AG04449 (cell line): ENCODE measurements at regions of chr2 and their contacts with region 1.

Region 1: GRCh38 chr2:134118279-134119116 is 135.4 kb upstream of the MGAT5 start:
- DNase-seq: peak; percentile 94
- H3K4me3 ChIP-seq: no peak overlapping the region
- CTCF ChIP-seq: peak; percentile 68

Region 2: DNA sequence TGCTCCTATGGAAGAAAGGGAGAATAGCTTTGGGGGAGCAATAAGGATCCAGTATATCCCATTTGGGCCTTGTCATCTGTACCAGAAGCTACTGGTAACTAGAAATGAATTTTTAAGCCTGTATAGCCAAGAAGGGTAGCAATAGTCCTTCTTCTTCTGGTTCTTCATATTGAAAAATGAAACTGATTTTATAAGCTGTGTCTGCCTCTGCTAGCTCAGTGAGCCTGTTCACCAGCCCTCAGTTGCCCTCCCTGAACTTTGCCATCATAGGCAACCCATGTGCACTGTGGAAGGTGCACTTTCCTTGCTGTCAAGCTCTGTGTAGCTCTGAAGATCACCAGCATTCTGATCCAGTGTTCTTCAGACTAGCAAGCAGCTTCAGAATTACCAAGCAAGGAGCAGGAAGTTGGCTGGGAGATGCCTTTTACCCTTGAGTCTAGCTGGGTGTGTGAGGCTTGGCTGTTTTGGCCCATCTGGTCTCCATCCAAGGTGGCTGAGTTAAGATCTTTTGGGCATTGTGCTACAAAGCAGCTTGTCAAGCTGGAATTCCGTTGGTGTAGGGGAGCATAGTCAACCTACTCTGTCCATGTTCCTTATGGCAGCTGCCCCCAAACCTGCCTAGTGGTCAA is 79.6 kb after region 1 on chr2:
- CTCF ChIA-PET with region 1: interaction called, 10 read pairs
- POLR2A ChIA-PET with region 1: no interaction called
- DNase-seq: no peak
- H3K4me3 ChIP-seq: no peak overlapping the region
- CTCF ChIP-seq: no peak

Region 3: GRCh38 chr2:134232868-134233727 is 114.6 kb after region 1 on chr2:
- CTCF ChIA-PET with region 1: interaction called, 14 read pairs
- POLR2A ChIA-PET with region 1: interaction called, 3 read pairs
- DNase-seq: no peak
- H3K4me3 ChIP-seq: no peak overlapping the region
- CTCF ChIP-seq: no peak

Region 4: DNA sequence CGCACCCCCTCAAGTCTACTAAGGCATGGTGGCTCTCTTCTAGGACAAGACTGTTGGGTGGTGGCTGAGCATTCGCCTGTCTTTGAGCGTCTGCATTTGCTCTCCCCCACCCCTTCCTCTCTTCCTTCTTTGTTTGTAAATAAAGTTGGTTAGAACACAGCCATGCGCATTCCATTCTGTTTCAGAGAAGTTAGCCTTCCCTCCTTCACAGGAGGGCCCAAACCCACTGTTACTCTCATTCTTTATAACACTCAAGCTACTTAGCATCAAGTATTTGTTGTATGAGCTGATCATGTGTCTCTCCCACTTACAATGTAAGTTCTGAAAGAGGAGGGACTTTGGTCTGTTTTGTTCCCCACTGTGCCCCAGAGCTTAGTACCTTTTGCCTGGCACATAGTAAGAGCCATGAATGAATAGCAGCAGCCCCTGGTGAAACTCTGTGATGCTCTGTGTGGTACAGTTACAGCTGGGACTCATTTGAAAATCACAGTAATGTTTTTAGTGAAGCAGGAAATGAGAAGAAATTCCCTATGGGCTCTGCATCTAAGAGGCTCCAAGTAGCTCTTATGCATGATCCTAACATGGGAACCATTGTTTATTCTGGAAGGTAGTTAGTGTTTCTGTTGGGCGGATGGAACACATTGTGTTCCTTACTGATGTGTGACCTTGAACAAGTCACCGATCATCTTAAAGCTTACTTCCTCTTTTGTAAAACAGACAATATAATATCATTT is 143.1 kb after region 1 on chr2:
- CTCF ChIA-PET with region 1: interaction called, 17 read pairs
- POLR2A ChIA-PET with region 1: interaction called, 6 read pairs
- DNase-seq: no peak
- H3K4me3 ChIP-seq: no peak overlapping the region
- CTCF ChIP-seq: no peak

Region 5: GRCh38 chr2:134402410-134402809 is 283.9 kb after region 1 on chr2:
- CTCF ChIA-PET with region 1: interaction called, 14 read pairs
- POLR2A ChIA-PET with region 1: no interaction called
- DNase-seq: peak; percentile 79
- H3K4me3 ChIP-seq: no peak overlapping the region
- CTCF ChIP-seq: no peak

Region 6: DNA sequence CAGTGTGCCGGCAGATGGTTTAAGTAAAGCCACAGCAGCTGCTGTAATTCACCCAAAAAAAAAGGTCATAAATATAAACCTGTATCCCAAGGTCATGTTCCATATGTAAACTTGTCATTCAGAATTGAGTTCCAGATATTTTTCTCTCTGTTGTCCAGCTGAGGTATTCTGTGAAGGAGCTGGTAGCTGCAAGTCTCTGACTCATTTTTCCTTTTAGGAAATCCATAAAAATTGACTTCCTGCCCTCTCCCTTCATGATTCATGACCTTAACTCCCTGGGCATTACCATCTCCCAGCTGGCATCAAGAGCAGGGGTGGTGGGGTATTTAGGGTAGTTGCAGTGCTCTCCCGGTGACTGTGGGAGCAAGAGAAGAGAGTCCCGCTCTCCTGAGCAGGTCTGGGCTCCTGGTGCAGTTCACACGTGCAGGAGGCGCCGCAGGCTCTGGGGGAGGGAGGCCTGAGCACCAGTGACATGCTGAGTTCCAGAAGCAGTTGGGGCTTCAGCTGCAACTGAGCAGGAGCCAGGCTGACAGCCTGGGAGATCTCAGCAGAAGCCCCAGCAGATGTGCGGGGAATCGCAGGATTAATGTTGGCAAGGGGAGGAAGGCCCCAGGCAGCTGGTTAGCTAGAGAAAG is 328.0 kb after region 1 on chr2:
- CTCF ChIA-PET with region 1: interaction called, 154 read pairs
- POLR2A ChIA-PET with region 1: no interaction called
- DNase-seq: no peak
- H3K4me3 ChIP-seq: no peak overlapping the region
- CTCF ChIP-seq: no peak